Activated B cell treated with CpG ODN at 0.5 μM for 24 hours (primary cell): ENCODE measurements at regions of chr10 and their contacts with region 1.

Region 1: DNA sequence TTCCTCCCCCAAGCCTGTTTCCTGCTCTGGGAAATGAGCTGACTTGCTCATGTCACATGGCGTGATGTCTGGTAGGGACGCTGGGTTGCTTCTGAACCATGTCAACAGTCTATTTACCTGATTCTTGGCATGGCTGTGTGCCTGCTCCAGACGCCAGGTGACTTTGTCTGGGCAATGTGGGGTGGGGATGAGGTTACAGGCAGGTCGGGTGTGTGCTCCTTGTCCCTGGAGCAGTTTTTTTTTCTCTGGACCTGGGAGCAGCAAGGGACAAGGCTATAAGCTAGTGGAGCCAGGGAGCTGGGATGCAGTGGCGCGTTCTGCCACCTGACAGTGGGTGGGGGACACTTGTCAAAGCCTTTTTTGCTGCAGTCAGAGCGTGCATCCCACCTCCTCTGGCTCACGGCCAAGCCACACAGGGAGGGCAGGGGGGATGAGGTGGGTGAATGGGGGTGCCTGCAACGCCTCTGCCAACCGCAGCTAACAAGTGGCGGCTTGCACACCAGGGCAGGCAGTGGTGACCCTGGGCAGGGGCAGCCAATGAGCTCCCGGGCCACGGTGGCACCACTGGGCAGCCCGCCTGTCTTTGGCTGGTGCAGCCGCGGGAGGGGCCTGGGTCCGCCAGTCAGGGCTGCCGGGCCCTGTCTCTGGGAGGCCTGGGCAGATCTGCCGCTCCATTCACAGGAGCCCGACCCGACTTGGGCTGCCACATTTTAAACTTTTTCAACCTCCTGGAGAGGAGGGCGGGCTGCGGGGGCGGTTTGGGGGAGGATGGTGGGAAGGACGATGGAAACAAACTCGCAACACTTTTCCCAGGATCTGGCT is 22.9 kb downstream of the DNAJB12 start:
- DNase-seq: peak; percentile 81
- ATAC-seq: peak; percentile 82
- H3K4me3 Mint-ChIP-seq: peak overlapping the region; percentile 71
- H3K27ac Mint-ChIP-seq: peak overlapping the region; percentile 94
- H3K4me1 Mint-ChIP-seq: peaks cover 93% of the 10 kb centered on the region
- H3K27me3 Mint-ChIP-seq: no peaks in the 10 kb centered on the region
- CTCF ChIP-seq: no peak

Region 2: GRCh38 chr10:71766702-71767419 is 565.0 kb before region 1 on chr10:
- CTCF ChIA-PET with region 1: no interaction called
- POLR2A ChIA-PET with region 1: no interaction called
- intact Hi-C with region 1: loop called (anchors 10 kb)
- DNase-seq: no peak
- ATAC-seq: peak; percentile 16
- H3K4me3 Mint-ChIP-seq: peak overlapping the region; percentile 55
- H3K27ac Mint-ChIP-seq: peak overlapping the region; percentile 91
- H3K4me1 Mint-ChIP-seq: peaks cover 79% of the 10 kb centered on the region
- H3K27me3 Mint-ChIP-seq: no peaks in the 10 kb centered on the region
- CTCF ChIP-seq: no peak

Region 3: GRCh38 chr10:71985542-71986250 is 346.1 kb before region 1 on chr10:
- CTCF ChIA-PET with region 1: no interaction called
- POLR2A ChIA-PET with region 1: no interaction called
- intact Hi-C with region 1: no loop called
- DNase-seq: no peak
- ATAC-seq: peak; percentile 31
- H3K4me3 Mint-ChIP-seq: no peak overlapping the region
- H3K27ac Mint-ChIP-seq: no peak overlapping the region
- H3K4me1 Mint-ChIP-seq: peaks cover 16% of the 10 kb centered on the region
- H3K27me3 Mint-ChIP-seq: peaks cover 5% of the 10 kb centered on the region
- CTCF ChIP-seq: no peak

Region 4: GRCh38 chr10:72088889-72089575 is 242.8 kb before region 1 on chr10:
- CTCF ChIA-PET with region 1: interaction called, 3 read pairs
- POLR2A ChIA-PET with region 1: interaction called, 30 read pairs
- intact Hi-C with region 1: no loop called
- DNase-seq: peak; percentile 29
- ATAC-seq: peak; percentile 27
- H3K4me3 Mint-ChIP-seq: peak overlapping the region; percentile 99
- H3K27ac Mint-ChIP-seq: peak overlapping the region; percentile 97
- H3K4me1 Mint-ChIP-seq: peaks cover 39% of the 10 kb centered on the region
- H3K27me3 Mint-ChIP-seq: no peaks in the 10 kb centered on the region
- CTCF ChIP-seq: no peak

Region 5: DNA sequence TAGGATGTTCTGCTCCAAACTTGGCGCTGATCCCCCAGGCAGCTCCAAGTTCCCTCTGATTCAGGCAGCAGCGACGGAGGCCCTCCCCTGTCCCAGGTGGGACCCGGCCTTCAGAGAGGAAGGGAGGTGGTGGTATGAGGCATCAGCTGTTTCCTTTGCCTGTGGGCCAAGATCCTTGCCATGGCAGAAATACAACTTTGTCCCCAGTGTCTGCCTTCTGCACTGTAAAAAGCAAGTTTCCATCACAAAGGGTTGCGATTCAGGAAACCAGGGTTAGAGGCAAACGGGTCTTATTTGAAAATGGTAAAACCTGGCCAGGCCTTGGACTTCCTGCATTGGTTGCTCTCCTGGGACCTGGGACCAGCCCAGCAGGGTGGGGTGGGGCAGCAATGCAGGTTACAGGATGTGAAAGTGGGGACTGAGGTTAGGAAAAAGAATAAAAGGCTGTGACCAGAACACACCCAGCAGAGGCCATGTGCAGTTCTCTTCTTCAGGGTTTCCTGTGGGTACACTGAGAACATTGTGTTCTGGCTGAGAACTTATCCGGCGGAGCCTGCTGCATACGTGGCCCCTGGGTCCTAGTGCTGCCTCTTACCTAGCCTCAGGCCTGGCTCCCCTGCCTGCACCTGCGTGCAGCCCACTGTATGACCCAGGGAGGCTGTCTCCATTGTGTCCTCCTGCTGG is 83.2 kb before region 1 on chr10:
- CTCF ChIA-PET with region 1: interaction called, 10 read pairs
- POLR2A ChIA-PET with region 1: interaction called, 20 read pairs
- intact Hi-C with region 1: loop called (anchors 1 kb)
- DNase-seq: peak; percentile 54
- ATAC-seq: peak; percentile 78
- H3K4me3 Mint-ChIP-seq: peak overlapping the region; percentile 74
- H3K27ac Mint-ChIP-seq: peak overlapping the region; percentile 97
- H3K4me1 Mint-ChIP-seq: peaks cover 85% of the 10 kb centered on the region
- H3K27me3 Mint-ChIP-seq: no peaks in the 10 kb centered on the region
- CTCF ChIP-seq: no peak

Region 6: DNA sequence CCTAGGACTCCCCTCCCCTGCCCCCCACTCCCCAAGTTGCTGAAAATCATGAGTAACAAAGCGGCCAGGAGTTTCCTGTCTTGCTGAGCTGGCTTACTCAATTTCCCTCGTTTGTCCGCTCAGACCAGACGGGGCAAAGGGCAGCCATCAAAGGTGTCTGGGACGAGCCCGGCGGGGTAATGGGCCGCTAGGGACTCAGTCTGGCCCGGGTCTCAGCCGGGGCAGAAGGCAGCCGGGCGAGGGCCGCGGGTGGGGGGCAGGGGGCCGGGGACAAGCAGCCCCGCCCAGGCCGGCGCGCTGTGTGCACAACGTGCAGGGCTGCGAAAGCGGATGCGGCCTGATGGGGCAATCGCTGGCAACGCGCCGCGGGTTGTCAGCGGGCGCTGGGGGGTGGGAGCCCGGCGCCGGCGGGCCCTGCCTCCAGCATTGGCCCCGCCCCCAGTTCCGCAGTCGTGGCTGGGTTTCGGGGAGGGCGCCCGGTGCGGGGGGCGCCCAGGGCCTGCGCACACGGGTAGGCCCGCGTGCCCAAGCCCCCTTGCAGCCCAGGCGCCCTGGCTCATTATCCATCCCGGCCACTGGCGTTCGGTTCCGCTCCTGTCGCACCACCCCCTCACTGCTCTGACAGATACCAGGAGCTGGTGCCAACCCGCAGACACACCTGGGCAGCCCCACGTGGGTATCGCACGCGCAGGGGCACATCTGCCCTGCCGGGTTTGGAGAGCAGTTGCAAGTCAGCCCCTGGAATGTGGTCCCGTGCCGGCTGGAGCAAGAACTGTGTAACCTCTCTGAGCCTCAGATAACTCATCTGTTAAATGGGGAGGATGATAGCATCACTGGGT is 12.2 kb before region 1 on chr10:
- CTCF ChIA-PET with region 1: interaction called, 33 read pairs
- POLR2A ChIA-PET with region 1: interaction called, 707 read pairs
- intact Hi-C with region 1: loop called (anchors 1 kb)
- DNase-seq: peak; percentile 87
- ATAC-seq: peak; percentile 52
- H3K4me3 Mint-ChIP-seq: peak overlapping the region; percentile 81
- H3K27ac Mint-ChIP-seq: peak overlapping the region; percentile 98
- H3K4me1 Mint-ChIP-seq: peaks cover 86% of the 10 kb centered on the region
- H3K27me3 Mint-ChIP-seq: no peaks in the 10 kb centered on the region
- CTCF ChIP-seq: no peak

Region 7: GRCh38 chr10:72511459-72511858 is 179.6 kb after region 1 on chr10:
- CTCF ChIA-PET with region 1: no interaction called
- POLR2A ChIA-PET with region 1: no interaction called
- intact Hi-C with region 1: no loop called
- DNase-seq: no peak
- ATAC-seq: no peak
- H3K4me3 Mint-ChIP-seq: no peak overlapping the region
- H3K27ac Mint-ChIP-seq: no peak overlapping the region
- H3K4me1 Mint-ChIP-seq: peaks cover 4% of the 10 kb centered on the region
- H3K27me3 Mint-ChIP-seq: no peaks in the 10 kb centered on the region
- CTCF ChIP-seq: no peak